Natural killer cell (primary cell): ENCODE measurements at regions of chr7 and their contacts with region 1.

Region 1: DNA sequence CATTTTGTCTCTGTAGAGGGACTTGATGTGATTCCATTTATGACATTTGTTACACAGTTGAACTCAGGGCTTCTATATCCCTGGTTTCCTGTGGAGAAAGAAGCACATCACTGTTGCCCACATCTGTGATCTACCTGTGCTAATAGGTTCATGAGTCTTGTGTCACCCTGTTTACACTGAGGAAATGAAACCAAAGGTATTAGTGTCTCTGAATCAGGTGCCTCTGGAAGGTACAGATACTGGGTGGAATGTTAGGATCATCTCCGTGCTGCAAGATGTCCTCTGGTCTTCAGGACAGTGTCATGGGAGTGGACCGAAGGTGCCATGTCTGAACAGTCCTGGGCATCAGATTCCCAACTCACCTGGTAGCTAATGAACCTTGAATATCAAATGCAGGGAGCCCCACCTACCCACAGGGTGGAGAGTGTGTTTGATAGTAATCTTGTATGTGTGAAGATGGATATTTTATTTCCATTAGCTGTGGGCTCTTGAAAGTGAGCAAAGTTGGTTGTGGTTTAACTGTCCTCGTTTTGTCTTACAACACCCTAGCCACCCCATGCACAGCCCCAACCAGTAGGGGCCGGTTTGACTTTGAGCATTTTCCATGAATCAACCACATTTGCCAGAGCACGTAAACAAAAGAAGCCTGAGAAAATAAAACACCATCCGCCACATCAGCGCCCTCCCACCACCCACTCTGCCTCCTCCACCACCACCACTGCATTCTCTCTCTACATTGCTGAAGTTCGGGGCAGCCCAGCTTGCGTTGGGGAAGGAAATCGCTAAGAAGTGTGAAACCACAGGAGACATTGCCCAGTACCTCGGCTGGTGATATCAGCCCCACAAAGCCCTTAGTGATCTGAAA is 40.7 kb downstream of the TARP start:
- DNase-seq: peak; percentile 82 to 90
- ATAC-seq: peak; percentile 68 to 89 (median 85)
- H3K4me3 ChIP-seq: no peak overlapping the region
- H3K4me3 Mint-ChIP-seq: peak overlapping the region; percentile 69
- H3K27ac ChIP-seq: peak overlapping the region; percentile 91
- H3K27ac Mint-ChIP-seq: peak overlapping the region; percentile 95 to 96
- H3K4me1 ChIP-seq: peaks cover 78% of the 10 kb centered on the region
- H3K4me1 Mint-ChIP-seq: peaks cover 91 to 97% of the 10 kb centered on the region in 2 donors
- H3K27me3 ChIP-seq: no peaks in the 10 kb centered on the region
- H3K27me3 Mint-ChIP-seq: no peaks in the 10 kb centered on the region
- CTCF ChIP-seq: no peak

Region 2: GRCh38 chr7:38195804-38196595 is 36.7 kb before region 1 on chr7:
- intact Hi-C with region 1: no loop called
- DNase-seq: no peak
- ATAC-seq: no peak
- H3K4me3 ChIP-seq: no peak overlapping the region
- H3K4me3 Mint-ChIP-seq: no peak overlapping the region
- H3K27ac ChIP-seq: no peak overlapping the region
- H3K27ac Mint-ChIP-seq: no peak overlapping the region
- H3K4me1 ChIP-seq: no peaks in the 10 kb centered on the region
- H3K4me1 Mint-ChIP-seq: peaks cover 48 to 53% of the 10 kb centered on the region in 2 donors
- H3K27me3 ChIP-seq: no peaks in the 10 kb centered on the region
- H3K27me3 Mint-ChIP-seq: no peaks in the 10 kb centered on the region
- CTCF ChIP-seq: no peak

Region 3: GRCh38 chr7:38215735-38216670 is 16.7 kb before region 1 on chr7:
- intact Hi-C with region 1: loop called (anchors 2 kb)
- DNase-seq: peak; percentile 78 to 93
- ATAC-seq: peak; percentile 58 to 86 (median 76)
- H3K4me3 ChIP-seq: no peak overlapping the region
- H3K4me3 Mint-ChIP-seq: peak overlapping the region; percentile 80
- H3K27ac ChIP-seq: peak overlapping the region; percentile 67
- H3K27ac Mint-ChIP-seq: peak overlapping the region; percentile 95 to 96
- H3K4me1 ChIP-seq: peaks cover 48% of the 10 kb centered on the region
- H3K4me1 Mint-ChIP-seq: peaks cover 52 to 60% of the 10 kb centered on the region in 2 donors
- H3K27me3 ChIP-seq: no peaks in the 10 kb centered on the region
- H3K27me3 Mint-ChIP-seq: no peaks in the 10 kb centered on the region
- CTCF ChIP-seq: peak; percentile 93

Region 4: GRCh38 chr7:38248069-38248567 is 15.4 kb after region 1 on chr7:
- intact Hi-C with region 1: loop called (anchors 1 kb)
- DNase-seq: no peak
- ATAC-seq: peak in 2 of 3 donors; percentile 25 to 28
- H3K4me3 ChIP-seq: peak overlapping the region; percentile 11
- H3K4me3 Mint-ChIP-seq: peak overlapping the region; percentile 32
- H3K27ac ChIP-seq: peak overlapping the region; percentile 54
- H3K27ac Mint-ChIP-seq: peak overlapping the region; percentile 93
- H3K4me1 ChIP-seq: peaks cover 16% of the 10 kb centered on the region
- H3K4me1 Mint-ChIP-seq: peaks cover 70 to 77% of the 10 kb centered on the region in 2 donors
- H3K27me3 ChIP-seq: no peaks in the 10 kb centered on the region
- H3K27me3 Mint-ChIP-seq: no peaks in the 10 kb centered on the region
- CTCF ChIP-seq: no peak

Region 5: GRCh38 chr7:38306171-38306570 is 73.4 kb after region 1 on chr7:
- intact Hi-C with region 1: loop called (anchors 2 kb)
- DNase-seq: no peak
- ATAC-seq: no peak
- H3K4me3 ChIP-seq: no peak overlapping the region
- H3K4me3 Mint-ChIP-seq: peak overlapping the region; percentile 99
- H3K27ac ChIP-seq: peak overlapping the region; percentile 97
- H3K27ac Mint-ChIP-seq: peak overlapping the region; percentile 95 to 99
- H3K4me1 ChIP-seq: peaks cover 67% of the 10 kb centered on the region
- H3K4me1 Mint-ChIP-seq: peaks cover 89% of the 10 kb centered on the region in 2 donors
- H3K27me3 ChIP-seq: no peaks in the 10 kb centered on the region
- H3K27me3 Mint-ChIP-seq: no peaks in the 10 kb centered on the region
- CTCF ChIP-seq: no peak